ENCODE measurements at regions of chr12 and their contacts with region 1.

Region 1: DNA sequence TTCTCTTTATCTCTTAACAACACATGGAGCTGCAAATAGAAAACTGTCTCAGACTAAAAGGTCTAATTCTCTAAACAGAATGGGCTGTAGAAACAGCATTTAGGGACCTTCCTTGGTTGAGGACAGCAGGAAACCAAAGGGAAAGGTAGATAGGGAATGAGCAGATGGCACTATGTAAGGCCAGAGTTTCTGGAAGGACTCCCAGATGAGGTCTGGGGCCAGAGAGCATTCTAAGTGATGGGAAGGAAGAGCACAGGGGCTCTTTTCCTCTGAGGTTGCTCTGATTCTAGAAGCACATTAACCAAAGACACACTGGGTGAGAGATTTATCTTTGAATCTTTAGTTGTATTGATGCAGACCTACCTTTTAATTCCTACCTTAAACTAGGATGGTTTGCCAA is 79.4 kb downstream of the TPH2 start:
- DNase-seq: no peak
- H3K4me3 ChIP-seq: no peak overlapping the region
- CTCF ChIP-seq: no peak

Region 2: GRCh38 chr12:71780237-71780822 is 237.7 kb before region 1 on chr12:
- CTCF ChIA-PET with region 1: no interaction called
- POLR2A ChIA-PET with region 1: no interaction called
- DNase-seq: no peak
- H3K4me3 ChIP-seq: no peak overlapping the region
- CTCF ChIP-seq: peak; percentile 41

Region 3: GRCh38 chr12:72264548-72265175 is 246.6 kb after region 1 on chr12:
- CTCF ChIA-PET with region 1: interaction called, 10 read pairs
- POLR2A ChIA-PET with region 1: no interaction called
- DNase-seq: no peak
- H3K4me3 ChIP-seq: no peak overlapping the region
- CTCF ChIP-seq: peak; percentile 21